A549 (cell line): ENCODE measurements at regions of chr10 and their contacts with region 1.

Region 1: DNA sequence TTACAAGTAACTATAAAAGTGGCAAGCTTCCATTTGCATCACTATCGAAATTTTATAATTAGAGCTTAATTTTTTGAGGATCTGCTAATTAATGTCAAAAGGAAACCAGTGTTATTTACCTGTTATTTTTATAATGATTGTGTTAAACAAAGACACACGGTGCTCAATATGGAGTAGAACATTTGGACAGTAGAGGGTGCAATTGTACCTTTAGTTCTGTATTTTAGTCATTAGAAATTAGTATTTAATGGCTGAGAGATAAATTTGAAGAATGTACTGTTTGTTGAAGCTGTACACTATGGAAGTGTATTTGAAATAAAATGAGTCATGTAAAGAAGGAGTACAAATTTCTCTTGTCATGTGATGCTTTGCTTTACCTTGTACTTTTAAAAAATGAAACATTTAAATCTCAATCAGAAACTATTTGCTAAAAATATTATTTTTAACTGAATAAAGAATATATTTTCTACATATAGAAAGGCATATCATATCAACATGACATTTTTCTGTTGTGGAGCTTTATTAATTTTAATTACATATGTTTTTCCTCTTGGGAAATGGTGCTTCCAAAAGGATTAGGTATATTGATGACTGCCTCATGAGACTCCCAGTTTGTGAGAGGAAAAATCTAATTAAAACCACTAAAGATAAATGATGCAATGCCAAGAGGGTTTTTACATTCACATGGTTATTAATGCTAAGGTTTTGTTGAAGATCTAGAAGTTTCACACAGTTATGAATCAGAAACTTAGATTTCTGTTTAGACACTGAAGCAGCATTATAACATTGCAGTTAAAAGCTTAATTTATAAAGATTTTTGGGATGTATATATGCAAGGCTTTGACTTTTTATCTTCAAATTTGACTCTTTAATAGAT is 10.4 kb upstream of the PRKG1 start:
- DNase-seq: peak in 1 of 2 experiments; percentile 28
- ATAC-seq: peak; percentile 59 to 75; a peak in 4 of 6 replicates
- H3K4me3 ChIP-seq: no peak overlapping the region
- H3K27ac ChIP-seq: no peak overlapping the region
- H3K4me1 ChIP-seq: no peaks in the 10 kb centered on the region
- CTCF ChIP-seq: peak; percentile 64
- EP300 ChIP-seq: no peak
- POLR2A ChIP-seq: no peak
- RAD21 ChIP-seq: peak; percentile 64 to 71

Region 2: GRCh38 chr10:51031950-51032349 is 31.9 kb before region 1 on chr10:
- CTCF ChIA-PET with region 1: no interaction called
- POLR2A ChIA-PET with region 1: no interaction called
- DNase-seq: no peak
- ATAC-seq: no peak
- H3K4me3 ChIP-seq: no peak overlapping the region
- H3K27ac ChIP-seq: no peak overlapping the region
- H3K4me1 ChIP-seq: no peaks in the 10 kb centered on the region
- CTCF ChIP-seq: no peak
- EP300 ChIP-seq: no peak
- POLR2A ChIP-seq: no peak
- RAD21 ChIP-seq: no peak

Region 3: DNA sequence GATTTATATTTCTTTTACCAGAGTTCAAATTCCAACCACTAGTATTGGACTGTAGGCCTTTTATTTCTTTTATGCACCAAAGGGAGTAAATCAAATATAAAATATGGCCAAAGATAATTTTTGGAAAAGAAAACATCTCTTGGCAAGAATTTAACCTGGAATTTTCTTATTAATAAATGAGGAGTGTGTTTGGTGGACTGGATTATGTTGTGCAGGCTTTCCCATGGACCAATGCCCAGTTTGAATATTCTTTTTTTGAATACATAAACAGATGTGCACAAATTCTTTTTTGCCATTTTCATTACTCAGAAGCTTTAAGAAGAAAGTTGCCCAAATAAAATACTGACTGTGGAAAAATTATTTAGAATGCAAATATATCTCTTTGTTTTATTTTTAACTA is 11.7 kb before region 1 on chr10:
- CTCF ChIA-PET with region 1: interaction called, 14 read pairs
- POLR2A ChIA-PET with region 1: no interaction called
- DNase-seq: no peak
- ATAC-seq: no peak
- H3K4me3 ChIP-seq: no peak overlapping the region
- H3K27ac ChIP-seq: no peak overlapping the region
- H3K4me1 ChIP-seq: no peaks in the 10 kb centered on the region
- CTCF ChIP-seq: no peak
- EP300 ChIP-seq: no peak
- POLR2A ChIP-seq: no peak
- RAD21 ChIP-seq: no peak

Region 4: DNA sequence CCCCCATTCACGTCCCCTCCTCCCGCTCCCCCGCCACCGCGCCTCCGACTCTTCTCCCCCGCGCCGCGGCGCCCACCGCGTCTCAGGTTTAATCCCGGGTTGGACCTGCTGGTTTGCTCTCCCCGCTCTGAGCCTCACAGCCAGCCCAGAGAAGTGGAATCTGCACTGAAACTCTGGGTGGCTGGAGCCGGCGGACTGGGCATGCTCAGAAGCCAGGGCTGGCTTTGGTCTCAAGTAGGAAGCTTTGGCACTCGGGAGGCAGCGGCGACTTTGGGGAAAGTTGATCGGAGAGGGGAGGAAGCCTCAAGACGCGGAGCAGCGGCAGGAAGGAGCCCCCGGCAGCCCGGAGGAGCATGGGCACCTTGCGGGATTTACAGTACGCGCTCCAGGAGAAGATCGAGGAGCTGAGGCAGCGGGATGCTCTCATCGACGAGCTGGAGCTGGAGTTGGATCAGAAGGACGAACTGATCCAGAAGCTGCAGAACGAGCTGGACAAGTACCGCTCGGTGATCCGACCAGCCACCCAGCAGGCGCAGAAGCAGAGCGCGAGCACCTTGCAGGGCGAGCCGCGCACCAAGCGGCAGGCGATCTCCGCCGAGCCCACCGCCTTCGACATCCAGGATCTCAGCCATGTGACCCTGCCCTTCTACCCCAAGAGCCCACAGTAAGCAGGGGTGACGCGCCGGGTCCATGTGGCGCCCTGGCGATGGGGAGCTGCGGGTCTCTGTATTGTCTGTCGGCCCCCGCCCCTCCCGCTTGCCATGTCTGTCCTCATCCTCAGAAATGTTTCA is 10.5 kb after region 1 on chr10 and contains the start of gene PRKG1:
- CTCF ChIA-PET with region 1: interaction called, 15 read pairs
- POLR2A ChIA-PET with region 1: no interaction called
- DNase-seq: peak; percentile 38 to 41
- ATAC-seq: peak; percentile 96
- H3K4me3 ChIP-seq: peak within 1 kb of the TSS; percentile 45
- H3K27ac ChIP-seq: peak within 1 kb of the TSS in 1 of 2 experiments; percentile 33; a peak in 2 of 6 replicates
- H3K4me1 ChIP-seq: peaks cover 2% of the 10 kb centered on the region; the same call in 1 of the 3 replicates
- CTCF ChIP-seq: no peak
- EP300 ChIP-seq: no peak
- POLR2A ChIP-seq: no peak
- RAD21 ChIP-seq: no peak
- polyA plus RNA-seq, gene PRKG1: 0.04 TPM in 1 of 2 replicates, not detected in the other

Region 5: DNA sequence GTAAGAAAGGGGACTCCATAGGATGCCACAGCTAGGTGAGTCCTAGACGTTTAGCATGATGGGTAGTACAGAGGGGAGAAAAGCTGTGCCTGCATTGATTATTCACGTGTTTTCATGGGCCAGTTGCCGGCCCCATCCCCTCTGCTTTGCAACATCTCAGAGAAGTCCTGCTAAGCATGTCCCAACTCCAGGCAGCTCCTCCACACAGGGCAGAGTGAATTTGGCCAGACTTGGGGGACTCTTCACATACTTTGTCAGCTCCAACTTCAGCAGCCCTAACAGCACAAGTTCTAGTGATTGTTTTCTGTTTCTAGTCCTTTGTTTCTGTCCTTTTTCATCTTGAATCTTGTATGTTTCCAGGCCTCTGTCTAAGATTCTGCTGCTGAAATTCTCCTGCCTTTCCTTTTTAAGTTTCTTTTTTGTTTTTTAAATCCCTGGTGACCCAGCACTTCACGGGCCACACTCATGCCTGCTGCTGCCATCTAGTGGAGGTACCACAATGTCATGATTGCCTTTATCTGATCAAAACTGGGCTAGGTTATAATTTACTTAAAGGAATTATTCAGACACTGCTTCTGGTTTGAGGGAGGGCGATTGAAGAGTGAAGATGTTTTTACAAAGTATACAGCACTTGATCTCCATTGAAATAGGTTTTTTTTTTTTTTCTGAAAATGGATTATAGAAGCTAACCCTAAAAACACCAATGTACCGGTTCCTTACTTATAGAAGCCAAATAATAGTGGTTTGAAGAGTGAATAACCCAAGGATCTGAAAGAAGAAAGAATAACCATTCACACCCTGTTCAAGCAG is 358.6 kb after region 1 on chr10:
- CTCF ChIA-PET with region 1: interaction called, 17 read pairs
- POLR2A ChIA-PET with region 1: no interaction called
- DNase-seq: peak; percentile 13 to 26
- ATAC-seq: peak; percentile 50 to 78; a peak in 4 of 6 replicates
- H3K4me3 ChIP-seq: no peak overlapping the region
- H3K27ac ChIP-seq: no peak overlapping the region
- H3K4me1 ChIP-seq: no peaks in the 10 kb centered on the region
- CTCF ChIP-seq: peak; percentile 47
- EP300 ChIP-seq: no peak
- POLR2A ChIP-seq: no peak
- RAD21 ChIP-seq: peak; percentile 38; a peak in 2 of 5 replicates

Region 6: GRCh38 chr10:51960494-51960895 is 896.6 kb after region 1 on chr10:
- CTCF ChIA-PET with region 1: interaction called, 10 read pairs
- POLR2A ChIA-PET with region 1: no interaction called
- DNase-seq: peak; percentile 19 to 36
- ATAC-seq: peak in 1 of 2 experiments; percentile 76; a peak in 3 of 6 replicates
- H3K4me3 ChIP-seq: no peak overlapping the region
- H3K27ac ChIP-seq: no peak overlapping the region
- H3K4me1 ChIP-seq: no peaks in the 10 kb centered on the region
- CTCF ChIP-seq: peak; percentile 66
- EP300 ChIP-seq: no peak
- POLR2A ChIP-seq: no peak
- RAD21 ChIP-seq: peak; percentile 60 to 64